AG04449 (cell line): ENCODE measurements at regions of chr6 and their contacts with region 1.

Region 1: GRCh38 chr6:41735427-41736356 is at the start of gene TFEB:
- DNase-seq: peak; percentile 41
- H3K4me3 ChIP-seq: peak within 1 kb of the TSS; percentile 73
- CTCF ChIP-seq: peak; percentile 93

Region 2: DNA sequence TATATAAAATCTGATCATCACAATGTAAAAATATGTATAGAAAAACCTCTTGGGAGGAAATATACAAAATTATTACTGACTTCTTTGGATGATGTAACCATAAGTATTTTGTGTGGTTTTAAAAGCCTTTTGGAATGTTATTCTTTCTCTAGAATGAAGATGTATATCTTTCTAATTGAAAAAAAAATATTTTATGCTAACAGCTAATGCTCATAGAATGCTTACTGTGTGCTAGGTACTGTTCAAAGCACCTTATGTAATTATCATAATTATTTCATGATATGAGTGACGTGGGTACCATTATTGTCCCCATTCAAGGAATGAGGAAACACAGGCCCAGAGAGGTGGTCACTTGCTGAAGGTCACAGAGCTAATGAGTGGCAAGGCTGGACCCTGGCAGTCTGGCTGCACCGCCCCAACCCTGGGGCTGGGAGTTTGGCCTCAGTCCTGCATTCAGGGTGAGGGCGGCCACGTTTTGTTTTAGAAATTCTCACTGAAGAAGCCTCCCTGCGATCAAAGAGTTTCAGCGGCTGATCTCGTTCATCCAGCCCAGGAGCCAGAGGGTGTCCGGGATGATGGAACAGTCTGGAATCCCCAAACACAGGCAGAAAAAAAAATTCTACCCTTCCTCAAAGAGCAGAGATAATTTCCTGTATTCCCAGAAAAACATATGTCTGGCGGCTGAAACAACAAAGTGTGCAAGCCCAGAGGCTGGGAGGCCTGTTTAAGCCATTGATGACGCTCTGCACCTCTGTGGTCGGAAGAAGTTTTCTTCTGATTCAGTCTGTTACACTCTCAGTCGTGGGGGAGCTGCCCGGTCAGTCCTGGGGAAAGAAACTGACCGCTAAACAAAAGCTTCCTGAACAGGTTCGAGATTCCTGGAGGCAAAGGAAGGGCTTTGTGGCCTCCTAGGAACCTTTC is 37.6 kb before region 1 on chr6:
- CTCF ChIA-PET with region 1: interaction called, 15 read pairs
- POLR2A ChIA-PET with region 1: interaction called, 10 read pairs
- DNase-seq: peak; percentile 95
- H3K4me3 ChIP-seq: peak overlapping the region; percentile 13
- CTCF ChIP-seq: no peak

Region 3: DNA sequence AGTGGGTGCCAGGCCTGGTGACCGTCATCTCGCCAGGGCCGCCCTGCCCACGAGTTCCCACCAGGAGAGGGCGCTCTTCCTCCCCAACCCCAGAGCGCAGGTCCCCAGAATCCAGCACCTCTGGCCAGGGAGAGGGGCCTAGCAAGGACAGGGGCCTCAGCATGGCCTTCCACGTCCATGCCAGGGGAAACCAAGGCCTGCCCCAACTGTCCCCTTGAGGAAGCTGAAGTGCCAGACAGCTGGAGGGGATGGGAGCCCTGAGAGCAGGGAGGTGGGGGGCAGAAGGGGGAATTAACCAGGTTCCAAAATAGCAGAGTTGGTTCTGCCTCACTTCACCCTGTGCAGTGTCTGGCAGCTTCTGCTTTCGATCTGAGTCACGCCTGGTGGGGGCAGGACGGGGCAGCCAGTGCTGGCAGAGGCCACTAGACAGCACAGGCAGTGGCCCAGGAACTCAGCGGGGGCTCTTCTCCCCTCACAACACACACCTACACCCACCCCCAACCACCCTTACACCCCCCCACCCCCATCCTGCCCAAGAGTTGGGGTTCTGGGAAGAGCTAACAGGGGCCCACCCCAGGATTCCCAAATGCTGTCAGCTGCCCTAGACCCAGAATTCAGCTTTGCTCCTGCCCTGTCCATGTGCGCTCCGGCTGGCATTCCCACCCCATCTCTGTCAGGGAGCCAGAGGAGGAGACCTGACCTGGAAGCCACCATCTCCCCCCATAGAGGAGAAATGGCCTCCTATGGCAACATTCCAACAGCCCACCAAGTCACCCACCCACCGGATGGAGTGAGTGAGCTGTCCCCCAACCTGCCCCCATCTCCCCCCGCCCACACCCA is 29.5 kb before region 1 on chr6:
- CTCF ChIA-PET with region 1: interaction called, 32 read pairs
- POLR2A ChIA-PET with region 1: interaction called, 10 read pairs
- DNase-seq: no peak
- H3K4me3 ChIP-seq: no peak overlapping the region
- CTCF ChIP-seq: peak; percentile 76

Region 4: GRCh38 chr6:41723530-41724227 is 12.0 kb before region 1 on chr6:
- CTCF ChIA-PET with region 1: interaction called, 35 read pairs
- POLR2A ChIA-PET with region 1: interaction called, 9 read pairs
- DNase-seq: peak; percentile 63
- H3K4me3 ChIP-seq: peak overlapping the region; percentile 44
- CTCF ChIP-seq: peak; percentile 7

Region 5: DNA sequence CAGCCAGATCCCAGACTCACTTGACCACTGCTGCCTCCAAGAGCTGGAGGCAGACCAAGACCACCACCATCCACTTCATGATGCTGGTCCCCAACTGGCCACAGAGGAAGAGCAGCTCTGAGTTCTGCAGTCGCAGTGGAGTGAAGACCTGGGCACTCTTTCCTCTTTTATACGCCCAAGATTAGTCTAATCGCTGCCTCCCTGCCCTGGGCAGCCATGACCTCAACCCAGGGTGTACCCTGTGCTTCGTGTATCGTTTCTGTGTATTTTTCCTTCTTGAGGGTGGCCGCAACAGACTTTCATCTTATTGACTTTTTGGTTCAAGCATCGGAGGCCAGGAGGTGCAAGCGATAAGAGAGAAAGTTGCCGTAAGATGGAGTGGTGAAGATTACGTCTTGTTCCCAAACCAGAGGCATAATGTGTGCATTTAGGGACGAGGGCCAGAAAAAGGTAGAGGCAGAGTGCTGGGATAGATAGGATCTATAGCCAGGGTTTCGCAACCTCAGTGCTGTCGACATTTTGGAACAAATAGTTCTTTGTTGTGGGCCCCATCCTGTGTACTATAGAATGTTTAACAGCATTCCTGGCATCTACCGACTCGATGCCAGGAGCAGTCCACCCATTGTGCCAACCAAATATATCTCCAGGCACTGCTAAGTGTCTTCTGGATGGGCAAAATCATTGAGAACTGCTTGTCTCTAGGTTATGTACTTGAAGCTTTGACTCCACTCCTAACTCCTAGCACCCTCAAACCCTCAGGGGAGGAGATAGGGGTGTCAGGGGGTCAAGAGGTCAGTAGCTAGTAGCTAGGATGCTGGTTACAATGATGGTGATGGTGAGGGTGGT is 11.8 kb after region 1 on chr6 and contains the start of gene PGC:
- CTCF ChIA-PET with region 1: interaction called, 14 read pairs
- POLR2A ChIA-PET with region 1: no interaction called
- DNase-seq: no peak
- H3K4me3 ChIP-seq: no peak within 1 kb of the TSS
- CTCF ChIP-seq: no peak

Region 6: GRCh38 chr6:41775293-41776181 is 39.8 kb after region 1 on chr6:
- CTCF ChIA-PET with region 1: interaction called, 50 read pairs
- POLR2A ChIA-PET with region 1: no interaction called
- DNase-seq: no peak
- H3K4me3 ChIP-seq: no peak overlapping the region
- CTCF ChIP-seq: peak; percentile 89

Region 7: GRCh38 chr6:42520786-42521607 is 785.3 kb after region 1 on chr6:
- CTCF ChIA-PET with region 1: no interaction called
- POLR2A ChIA-PET with region 1: no interaction called
- DNase-seq: peak; percentile 34
- H3K4me3 ChIP-seq: no peak overlapping the region
- CTCF ChIP-seq: no peak